Calu3 (cell line): ENCODE measurements at regions of chr1 and their contacts with region 1.

Region 1: DNA sequence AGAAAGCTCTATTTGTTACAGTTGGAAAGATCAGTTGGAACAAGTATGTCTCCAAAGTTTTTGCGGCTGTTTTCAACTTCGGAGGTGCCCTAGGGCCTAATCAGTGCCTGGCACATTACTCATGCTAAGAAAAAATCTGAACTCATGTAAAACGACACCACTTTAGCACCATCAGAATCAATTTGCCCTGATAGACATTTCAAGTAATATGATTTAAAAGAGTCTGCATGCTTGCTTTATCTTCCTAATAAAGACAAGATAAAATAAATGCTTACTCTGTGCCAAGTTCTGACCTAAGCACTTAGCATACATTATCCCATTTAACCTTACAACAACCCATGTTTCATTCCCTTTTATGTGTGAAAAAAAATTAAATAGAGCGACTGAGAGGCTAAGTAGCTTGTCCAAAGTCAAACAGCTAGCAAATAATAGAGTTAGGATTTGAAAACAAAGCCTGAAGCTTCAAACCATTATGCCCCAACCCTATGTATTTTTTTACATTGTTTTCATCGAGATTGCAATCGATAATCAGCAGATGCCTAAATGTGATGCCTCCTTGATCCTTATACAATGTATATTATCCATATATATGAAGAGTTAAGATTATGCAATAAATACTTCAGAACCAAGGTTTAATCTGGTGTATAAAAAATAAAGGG is 91.3 kb downstream of the DENND1B start:
- DNase-seq: no peak
- H3K4me3 Mint-ChIP-seq: no peak overlapping the region
- H3K27ac Mint-ChIP-seq: no peak overlapping the region
- H3K4me1 Mint-ChIP-seq: peaks cover 40% of the 10 kb centered on the region
- H3K27me3 Mint-ChIP-seq: no peaks in the 10 kb centered on the region
- CTCF ChIP-seq: no peak

Region 2: GRCh38 chr1:197706601-197707000 is 22.6 kb after region 1 on chr1:
- CTCF ChIA-PET with region 1: no interaction called
- intact Hi-C with region 1: no loop called
- DNase-seq: no peak
- H3K4me3 Mint-ChIP-seq: no peak overlapping the region
- H3K27ac Mint-ChIP-seq: no peak overlapping the region
- H3K4me1 Mint-ChIP-seq: no peaks in the 10 kb centered on the region
- H3K27me3 Mint-ChIP-seq: no peaks in the 10 kb centered on the region
- CTCF ChIP-seq: no peak

Region 3: GRCh38 chr1:197915862-197916499 is 232.0 kb after region 1 on chr1:
- CTCF ChIA-PET with region 1: no interaction called
- intact Hi-C with region 1: loop called (anchors 5 kb)
- DNase-seq: peak; percentile 88
- H3K4me3 Mint-ChIP-seq: peak overlapping the region; percentile 76
- H3K27ac Mint-ChIP-seq: no peak overlapping the region
- H3K4me1 Mint-ChIP-seq: peaks cover 37% of the 10 kb centered on the region
- H3K27me3 Mint-ChIP-seq: peaks cover 13% of the 10 kb centered on the region
- CTCF ChIP-seq: peak; percentile 72